CD8-positive, alpha-beta T cell (primary cell): ENCODE measurements at regions of chr13 and their contacts with region 1.

Region 1: GRCh38 chr13:93098972-93099371 is 127.6 kb upstream of the GPC6 start:
- DNase-seq: no peak
- ATAC-seq: no peak
- H3K4me3 ChIP-seq: no peak overlapping the region
- H3K4me3 Mint-ChIP-seq: no peak overlapping the region
- H3K27ac ChIP-seq: no peak overlapping the region
- H3K27ac Mint-ChIP-seq: no peak overlapping the region
- H3K4me1 ChIP-seq: no peaks in the 10 kb centered on the region
- H3K4me1 Mint-ChIP-seq: no peaks in the 10 kb centered on the region
- H3K27me3 ChIP-seq: no peaks in the 10 kb centered on the region
- H3K27me3 Mint-ChIP-seq: no peaks in the 10 kb centered on the region
- CTCF ChIP-seq: no peak

Region 2: DNA sequence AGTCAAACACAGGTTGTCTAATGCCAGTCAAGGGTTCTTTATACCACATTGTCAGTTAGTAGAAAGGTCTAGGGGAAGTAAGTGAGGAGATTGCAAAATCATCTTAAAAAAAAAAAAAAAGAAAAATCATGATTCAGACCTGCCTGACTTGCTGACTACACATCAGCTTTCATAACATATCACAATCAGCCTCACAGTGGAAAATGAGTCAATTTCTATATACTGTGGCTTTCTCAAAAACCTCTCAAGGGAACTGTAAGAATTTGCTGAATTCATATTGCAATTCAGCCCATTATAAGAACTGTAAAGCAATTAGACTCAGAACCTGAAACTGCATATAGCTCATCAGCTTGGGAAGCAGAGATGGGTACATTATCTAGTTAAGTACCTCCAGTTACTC is 52.3 kb after region 1 on chr13:
- CTCF ChIA-PET with region 1: no interaction called
- POLR2A ChIA-PET with region 1: no interaction called
- intact Hi-C with region 1: loop called in 1 of 2 experiments (anchors 10 kb)
- DNase-seq: no peak
- ATAC-seq: no peak
- H3K4me3 ChIP-seq: no peak overlapping the region
- H3K4me3 Mint-ChIP-seq: no peak overlapping the region
- H3K27ac ChIP-seq: no peak overlapping the region
- H3K27ac Mint-ChIP-seq: no peak overlapping the region
- H3K4me1 ChIP-seq: no peaks in the 10 kb centered on the region
- H3K4me1 Mint-ChIP-seq: no peaks in the 10 kb centered on the region
- H3K27me3 ChIP-seq: no peaks in the 10 kb centered on the region
- H3K27me3 Mint-ChIP-seq: no peaks in the 10 kb centered on the region
- CTCF ChIP-seq: no peak

Region 3: DNA sequence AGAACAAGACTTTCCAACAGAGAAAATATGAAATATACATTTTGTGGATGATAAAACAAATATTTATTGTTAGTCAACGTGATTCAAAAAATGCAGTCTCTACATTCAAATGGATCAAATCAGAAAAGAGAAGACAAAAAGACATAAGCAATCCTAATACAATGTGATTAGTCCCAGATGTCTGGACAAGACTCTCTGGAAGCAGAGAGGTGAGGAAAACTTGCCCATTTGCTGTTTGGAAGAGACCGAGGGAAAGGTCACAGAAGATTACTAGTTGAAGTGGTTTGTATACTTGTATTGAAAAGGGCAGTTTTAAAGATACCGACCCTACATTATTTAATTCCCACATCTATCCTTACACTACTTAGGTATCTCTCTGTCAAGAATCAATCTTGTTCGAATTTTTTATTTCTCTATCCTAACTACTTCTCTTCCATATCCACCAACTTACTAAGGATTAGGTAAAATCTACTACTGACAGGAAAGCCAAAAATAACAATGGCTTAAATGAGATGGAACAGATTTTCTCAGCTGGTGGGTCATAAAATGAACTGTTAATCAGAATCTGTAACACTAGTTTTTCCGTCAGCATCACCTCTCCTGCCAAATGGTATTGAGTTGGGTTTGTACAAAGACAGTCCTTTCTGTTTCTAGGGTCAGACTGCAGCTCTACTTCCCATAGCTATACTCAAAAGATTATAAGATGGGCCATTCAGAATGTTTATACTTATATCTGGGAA is 883.4 kb after region 1 on chr13:
- CTCF ChIA-PET with region 1: no interaction called
- POLR2A ChIA-PET with region 1: no interaction called
- intact Hi-C with region 1: no loop called
- DNase-seq: no peak
- ATAC-seq: no peak
- H3K4me3 ChIP-seq: no peak overlapping the region
- H3K4me3 Mint-ChIP-seq: no peak overlapping the region
- H3K27ac ChIP-seq: no peak overlapping the region
- H3K27ac Mint-ChIP-seq: no peak overlapping the region
- H3K4me1 ChIP-seq: no peaks in the 10 kb centered on the region
- H3K4me1 Mint-ChIP-seq: no peaks in the 10 kb centered on the region
- H3K27me3 ChIP-seq: peaks cover 0 to under 1% of the 10 kb centered on the region in 2 experiments
- H3K27me3 Mint-ChIP-seq: peaks cover 5% of the 10 kb centered on the region
- CTCF ChIP-seq: no peak